PC-3 (cell line): ENCODE measurements at regions of chr4 and their contacts with region 1.

Region 1: DNA sequence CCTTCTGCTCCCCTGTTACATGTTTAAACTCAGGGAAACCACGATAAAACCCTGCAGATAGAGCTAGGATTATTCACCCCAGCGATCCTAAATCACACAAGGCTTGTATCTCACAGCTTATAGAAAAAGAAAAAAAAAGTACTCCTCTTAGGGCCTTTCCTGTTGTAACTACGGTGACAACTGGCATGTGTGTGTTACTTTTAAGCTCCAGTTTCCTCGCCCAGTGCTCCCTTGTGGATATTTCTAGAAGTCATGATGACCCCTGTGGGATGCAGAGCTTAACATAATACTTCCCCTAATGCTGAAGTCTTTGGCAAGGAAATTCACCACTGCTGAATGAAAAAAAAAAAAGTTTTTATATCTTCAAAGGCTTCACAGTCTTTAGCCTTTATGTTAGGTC is 114.7 kb downstream of the NWD2 start:
- DNase-seq: no peak
- ATAC-seq: no peak
- H3K4me3 ChIP-seq: no peak overlapping the region
- H3K27ac ChIP-seq: no peak overlapping the region
- H3K4me1 ChIP-seq: peaks cover 6% of the 10 kb centered on the region; the same call in 1 of the 2 replicates
- H3K27me3 ChIP-seq: no peaks in the 10 kb centered on the region; the same call in 1 of the 2 replicates
- CTCF ChIP-seq: no peak

Region 2: DNA sequence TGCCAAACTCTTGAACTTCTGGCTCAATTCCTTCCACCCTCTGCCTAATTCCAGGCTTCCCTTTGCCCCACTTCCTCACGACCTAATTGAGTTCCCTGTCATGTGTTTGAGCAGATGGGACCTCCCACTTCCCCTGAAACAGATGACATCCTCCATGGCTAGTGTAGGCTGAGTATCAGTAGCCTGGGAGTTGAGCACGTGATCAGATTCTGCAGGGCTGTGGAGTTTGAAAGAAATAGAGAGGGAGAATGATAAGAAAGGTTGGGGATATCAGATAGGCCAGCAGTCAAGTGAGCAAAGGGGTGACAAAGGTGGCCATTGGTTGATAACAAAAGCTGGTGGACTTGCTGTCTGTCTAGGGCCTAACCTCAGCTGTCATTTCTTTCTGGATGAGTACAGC is 133.5 kb before region 1 on chr4:
- CTCF ChIA-PET with region 1: no interaction called
- POLR2A ChIA-PET with region 1: interaction called, 10 read pairs
- intact Hi-C with region 1: no loop called
- DNase-seq: no peak
- ATAC-seq: no peak
- H3K4me3 ChIP-seq: no peak overlapping the region
- H3K27ac ChIP-seq: no peak overlapping the region
- H3K4me1 ChIP-seq: no peaks in the 10 kb centered on the region
- H3K27me3 ChIP-seq: peaks cover 4% of the 10 kb centered on the region; the same call in 1 of the 2 replicates
- CTCF ChIP-seq: no peak

Region 3: DNA sequence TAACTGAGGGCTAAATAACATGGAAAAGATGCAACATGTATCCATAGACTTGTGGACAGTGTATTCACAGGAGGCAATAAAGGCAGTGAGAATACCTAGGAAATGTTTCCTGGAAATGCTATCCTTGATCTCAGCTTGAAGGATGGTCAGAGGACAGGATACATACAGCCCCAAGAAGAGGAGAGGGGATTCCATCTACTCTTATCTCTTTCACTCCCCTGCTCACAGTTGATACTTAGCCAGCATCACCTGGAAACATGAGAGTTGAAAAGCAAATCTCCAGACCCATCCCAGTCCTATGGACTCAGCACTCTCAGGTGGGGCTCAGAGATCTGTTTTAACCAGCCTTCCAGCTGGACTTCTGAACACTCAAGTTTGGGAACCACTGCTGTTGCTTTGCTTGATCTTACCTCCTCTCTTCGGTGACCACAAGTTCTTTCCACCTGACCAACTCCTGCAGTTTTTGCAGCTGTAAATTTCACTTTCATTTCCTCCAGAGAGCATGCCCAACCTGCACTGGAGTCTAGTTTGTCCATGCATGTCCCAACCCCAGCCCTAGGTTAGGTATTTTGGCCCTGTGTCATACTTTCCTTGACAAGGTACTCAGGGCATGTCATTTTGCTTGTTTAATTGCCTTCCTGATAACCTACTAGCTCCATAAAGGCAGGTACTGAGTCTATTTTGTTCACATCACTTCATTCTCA is 316.5 kb after region 1 on chr4:
- CTCF ChIA-PET with region 1: no interaction called
- POLR2A ChIA-PET with region 1: no interaction called
- intact Hi-C with region 1: no loop called
- DNase-seq: no peak
- ATAC-seq: no peak
- H3K4me3 ChIP-seq: no peak overlapping the region
- H3K27ac ChIP-seq: no peak overlapping the region
- H3K4me1 ChIP-seq: no peaks in the 10 kb centered on the region
- H3K27me3 ChIP-seq: no peaks in the 10 kb centered on the region
- CTCF ChIP-seq: no peak

Region 4: GRCh38 chr4:38099908-38100407 is 740.7 kb after region 1 on chr4:
- CTCF ChIA-PET with region 1: no interaction called
- POLR2A ChIA-PET with region 1: no interaction called
- intact Hi-C with region 1: no loop called
- DNase-seq: no peak
- ATAC-seq: no peak
- H3K4me3 ChIP-seq: no peak overlapping the region
- H3K27ac ChIP-seq: no peak overlapping the region
- H3K4me1 ChIP-seq: no peaks in the 10 kb centered on the region
- H3K27me3 ChIP-seq: no peaks in the 10 kb centered on the region
- CTCF ChIP-seq: no peak